Aorta (tissue), 5 donors: ENCODE measurements at regions of chr1 and their contacts with region 1.

Region 1: DNA sequence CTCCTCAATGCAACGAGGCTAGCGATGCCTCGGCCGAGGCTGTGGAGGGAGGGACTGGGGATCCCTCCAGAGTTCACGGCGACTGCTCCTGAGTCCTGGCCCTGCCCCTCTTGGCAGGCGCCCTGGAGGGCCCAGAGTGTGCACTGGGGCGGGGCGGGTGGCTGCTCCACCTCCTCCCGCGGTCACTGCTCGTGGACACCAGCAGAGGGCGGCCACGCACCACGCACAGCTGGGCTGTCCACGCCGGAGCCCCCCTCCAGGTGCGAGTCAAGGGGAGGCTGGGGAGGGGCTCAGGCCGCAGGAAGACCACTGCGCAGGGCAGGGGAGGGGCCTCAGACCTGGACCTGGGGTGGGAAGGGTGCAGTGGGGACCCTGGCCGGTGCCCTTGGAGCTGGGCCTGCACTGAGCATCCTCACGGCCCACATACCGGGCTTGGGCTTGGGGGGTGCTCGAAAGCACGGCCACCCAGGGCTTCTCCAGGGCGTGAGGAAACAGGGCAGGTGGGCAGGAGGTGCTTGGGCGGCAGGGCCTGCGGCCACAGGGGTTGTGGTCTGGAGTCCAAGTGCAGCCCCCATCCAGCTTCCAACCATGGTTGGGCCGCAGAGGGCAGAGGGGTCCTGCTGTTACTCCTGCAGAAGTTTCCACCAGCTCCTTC is 20.6 kb upstream of the TTC34 start:
- DNase-seq: peak; percentile 78 to 87
- ATAC-seq: peak; percentile 82
- H3K4me3 ChIP-seq: no peak overlapping the region
- H3K27ac ChIP-seq: no peak overlapping the region
- H3K4me1 ChIP-seq: no peaks in the 10 kb centered on the region
- H3K27me3 ChIP-seq: no peaks in the 10 kb centered on the region

Region 2: DNA sequence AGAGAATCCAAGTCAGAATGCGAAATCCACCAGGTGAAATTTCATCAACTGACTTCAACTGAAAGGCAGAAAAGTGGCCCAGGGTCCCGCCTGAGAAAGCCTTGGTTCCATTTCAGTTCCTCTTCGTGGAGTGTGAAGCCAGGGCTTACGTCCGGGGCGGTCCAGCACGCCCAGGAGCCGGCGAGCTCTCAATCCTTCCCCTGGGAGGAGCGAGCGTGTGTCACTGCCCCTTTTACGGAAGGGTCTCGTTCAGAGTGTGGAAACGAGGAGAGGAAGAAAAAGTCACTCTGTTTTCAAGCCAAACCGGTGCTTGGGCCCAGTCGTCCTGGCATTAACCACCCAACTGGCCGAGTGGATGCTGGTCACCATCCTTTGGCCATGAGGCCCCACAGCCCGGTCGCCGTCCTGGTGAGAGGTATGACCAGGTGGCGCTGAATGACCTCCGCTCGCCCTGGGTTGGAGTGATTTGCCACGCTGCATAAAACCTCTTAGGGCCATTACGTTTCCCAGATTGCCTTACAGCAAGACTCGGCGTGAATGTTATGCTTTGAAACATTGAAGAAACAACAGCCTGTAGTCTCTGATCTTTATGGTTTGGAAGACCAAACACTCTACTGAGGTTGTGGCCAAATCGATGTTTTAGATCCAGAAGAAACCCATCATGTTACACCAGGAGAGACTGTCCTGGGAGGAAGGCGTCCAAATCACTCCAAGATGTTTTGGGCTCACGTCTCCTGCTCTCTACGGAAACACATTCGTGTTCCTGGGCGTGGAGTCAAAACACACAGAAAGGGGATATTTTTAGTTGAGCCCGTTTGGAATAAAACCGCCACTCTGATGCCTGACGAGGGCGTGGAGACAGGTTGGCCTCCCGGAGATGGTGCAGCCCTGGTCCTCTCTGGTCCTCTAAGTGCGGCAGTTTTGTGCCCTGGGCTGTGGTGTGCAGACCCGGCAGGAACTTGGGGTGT is 105.6 kb after region 1 on chr1:
- intact Hi-C with region 1: no loop called
- DNase-seq: peak; percentile 69 to 89
- ATAC-seq: peak; percentile 67
- H3K4me3 ChIP-seq: no peak overlapping the region
- H3K27ac ChIP-seq: peak overlapping the region; percentile 37 to 87
- H3K4me1 ChIP-seq: no peaks in the 10 kb centered on the region
- H3K27me3 ChIP-seq: no peaks in the 10 kb centered on the region

Region 3: DNA sequence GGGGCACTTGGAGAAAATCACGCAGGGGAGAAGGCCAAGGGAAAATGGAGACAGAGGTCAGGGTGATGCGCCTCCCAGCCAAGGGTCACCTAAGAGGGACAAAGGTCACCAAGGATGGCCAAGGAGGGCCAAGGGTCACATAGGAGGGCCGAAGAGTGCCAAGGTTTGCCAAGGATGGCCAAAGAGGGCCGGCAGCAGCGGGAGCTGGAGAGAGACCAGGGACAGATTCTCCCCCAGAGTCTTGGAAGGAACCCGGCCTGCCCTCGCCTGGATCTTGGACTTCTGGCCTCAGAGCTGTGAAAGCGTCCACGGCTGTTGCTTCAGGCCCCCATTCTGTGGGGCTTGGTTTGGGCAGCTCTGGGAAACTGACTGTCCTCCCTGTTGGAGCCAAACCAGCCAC is 606.8 kb after region 1 on chr1:
- intact Hi-C with region 1: loop called (anchors 5 to 10 kb)
- DNase-seq: peak in 1 of 2 donors; percentile 42
- ATAC-seq: no peak
- H3K4me3 ChIP-seq: no peak overlapping the region
- H3K27ac ChIP-seq: no peak overlapping the region
- H3K4me1 ChIP-seq: no peaks in the 10 kb centered on the region
- H3K27me3 ChIP-seq: no peaks in the 10 kb centered on the region